GM12878 (cell line): ENCODE measurements at regions of chr6 and their contacts with region 1.

Region 1: DNA sequence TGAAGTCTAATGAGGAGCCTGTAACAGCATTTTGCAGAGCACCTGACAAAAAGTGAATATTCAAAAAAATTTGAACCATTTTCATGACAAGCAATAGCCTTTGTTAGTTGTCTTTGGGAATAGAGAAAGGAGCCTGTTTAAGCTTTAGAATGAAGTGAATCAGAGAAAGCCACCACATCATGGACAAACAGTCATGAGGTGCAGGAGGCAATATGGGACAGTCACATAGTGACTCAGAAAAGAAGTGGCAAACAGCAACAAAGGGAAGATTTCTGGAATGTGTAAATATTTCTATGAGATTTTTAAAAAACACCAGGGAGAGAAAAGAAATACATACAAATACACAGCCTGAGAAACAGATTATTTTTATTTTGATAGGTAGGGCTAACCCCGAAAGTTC is 6.6 kb downstream of the KLHL31 start:
- DNase-seq: no peak
- ATAC-seq: no peak
- H3K4me3 ChIP-seq: no peak overlapping the region
- H3K27ac ChIP-seq: no peak overlapping the region
- H3K4me1 ChIP-seq: no peaks in the 10 kb centered on the region
- H3K27me3 ChIP-seq: peaks cover 0 to 4% of the 10 kb centered on the region in 2 experiments; a peak in 3 of 4 replicates
- CTCF ChIP-seq: no peak
- EP300 ChIP-seq: no peak
- POLR2A ChIP-seq: no peak
- RAD21 ChIP-seq: no peak

Region 2: DNA sequence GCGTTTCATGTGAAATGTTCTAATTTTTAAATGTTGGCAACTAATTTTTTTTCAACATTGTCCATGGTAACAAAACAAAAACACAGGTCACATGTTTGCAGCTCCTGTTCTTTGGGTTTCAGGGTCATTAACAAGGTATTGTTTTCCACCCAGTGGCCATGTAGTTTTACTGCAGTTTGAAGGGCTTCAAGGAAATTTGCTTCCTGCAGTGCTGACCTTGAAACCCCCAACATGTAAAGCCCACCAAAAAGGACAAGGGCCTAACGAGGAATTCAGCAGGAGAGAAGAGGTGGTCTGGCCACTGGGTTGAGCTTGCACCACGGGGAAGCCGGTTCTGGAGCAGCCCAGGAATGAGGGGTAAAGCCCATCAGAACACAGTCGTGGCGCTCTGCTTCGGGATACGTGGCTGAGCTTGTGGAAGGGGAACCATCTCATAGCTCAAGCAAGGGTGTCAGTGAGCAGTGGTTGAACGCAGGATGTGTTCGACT is 20.5 kb after region 1 on chr6:
- CTCF ChIA-PET with region 1: interaction called, 3 read pairs
- POLR2A ChIA-PET with region 1: no interaction called
- RAD21 ChIA-PET with region 1: no interaction called
- SMC1A ChIA-PET with region 1: interaction called, 5 read pairs
- in situ Hi-C with region 1: no loop called
- intact Hi-C with region 1: loop called (anchors 2 kb)
- DNase-seq: no peak
- ATAC-seq: peak; percentile 85
- H3K4me3 ChIP-seq: no peak overlapping the region
- H3K27ac ChIP-seq: no peak overlapping the region
- H3K4me1 ChIP-seq: no peaks in the 10 kb centered on the region
- H3K27me3 ChIP-seq: no peaks in the 10 kb centered on the region; a peak in 1 of 4 replicates
- CTCF ChIP-seq: peak; percentile 23 to 35 (median 28); a peak in 3 of 6 replicates
- EP300 ChIP-seq: no peak
- POLR2A ChIP-seq: no peak
- RAD21 ChIP-seq: peak; percentile 36; the same call in 1 of the 2 replicates